B cell (primary cell): ENCODE measurements at regions of chr3 and their contacts with region 1.

Region 1: DNA sequence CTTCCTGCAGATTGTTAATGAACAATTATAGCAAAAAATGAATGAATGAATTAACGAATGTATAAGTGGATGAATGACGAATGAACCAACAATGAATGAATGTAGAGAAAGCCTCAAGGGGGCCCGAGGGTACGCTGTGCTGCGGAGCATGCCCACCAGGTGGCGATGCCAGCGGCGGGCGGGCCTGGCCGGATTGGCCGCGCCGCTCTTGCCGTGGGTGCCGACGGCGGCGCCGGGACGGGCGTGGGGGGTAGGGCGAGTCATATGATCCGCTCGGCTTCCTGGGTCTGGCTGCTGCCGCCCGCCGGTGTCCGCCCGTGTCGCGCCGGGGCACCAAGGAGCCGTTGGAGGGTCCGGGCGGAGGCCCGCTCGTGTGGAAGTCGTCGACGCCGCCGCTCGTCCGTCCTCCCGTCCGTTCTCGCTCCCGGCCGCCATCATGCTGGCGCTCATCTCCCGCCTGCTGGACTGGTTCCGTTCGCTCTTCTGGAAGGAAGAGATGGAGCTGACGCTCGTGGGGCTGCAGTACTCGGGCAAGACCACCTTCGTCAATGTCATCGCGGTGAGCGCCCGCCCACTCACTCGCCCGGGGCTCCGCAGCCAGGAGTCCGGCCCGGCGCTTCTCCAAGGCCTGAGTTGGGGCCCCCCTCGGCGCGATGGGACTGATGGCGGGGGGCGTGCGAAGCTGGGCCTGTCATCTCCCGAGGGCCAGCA is at the start of gene ARL8B:
- DNase-seq: peak; percentile 93
- ATAC-seq: peak; percentile 97
- H3K4me3 ChIP-seq: peak within 1 kb of the TSS; percentile 83 to 100 (median 97)
- H3K4me3 Mint-ChIP-seq: peak within 1 kb of the TSS; percentile 95
- H3K27ac ChIP-seq: peak within 1 kb of the TSS; percentile 88 to 95
- H3K27ac Mint-ChIP-seq: peak within 1 kb of the TSS; percentile 91
- H3K4me1 ChIP-seq: peaks cover 25 to 29% of the 10 kb centered on the region in 2 donors
- H3K4me1 Mint-ChIP-seq: peaks cover 37% of the 10 kb centered on the region
- H3K27me3 ChIP-seq: no peaks in the 10 kb centered on the region
- H3K27me3 Mint-ChIP-seq: no peaks in the 10 kb centered on the region
- CTCF ChIP-seq: peak; percentile 97
- total RNA-seq, gene ARL8B: 66.4 and 67.3 TPM in 2 replicates

Region 2: DNA sequence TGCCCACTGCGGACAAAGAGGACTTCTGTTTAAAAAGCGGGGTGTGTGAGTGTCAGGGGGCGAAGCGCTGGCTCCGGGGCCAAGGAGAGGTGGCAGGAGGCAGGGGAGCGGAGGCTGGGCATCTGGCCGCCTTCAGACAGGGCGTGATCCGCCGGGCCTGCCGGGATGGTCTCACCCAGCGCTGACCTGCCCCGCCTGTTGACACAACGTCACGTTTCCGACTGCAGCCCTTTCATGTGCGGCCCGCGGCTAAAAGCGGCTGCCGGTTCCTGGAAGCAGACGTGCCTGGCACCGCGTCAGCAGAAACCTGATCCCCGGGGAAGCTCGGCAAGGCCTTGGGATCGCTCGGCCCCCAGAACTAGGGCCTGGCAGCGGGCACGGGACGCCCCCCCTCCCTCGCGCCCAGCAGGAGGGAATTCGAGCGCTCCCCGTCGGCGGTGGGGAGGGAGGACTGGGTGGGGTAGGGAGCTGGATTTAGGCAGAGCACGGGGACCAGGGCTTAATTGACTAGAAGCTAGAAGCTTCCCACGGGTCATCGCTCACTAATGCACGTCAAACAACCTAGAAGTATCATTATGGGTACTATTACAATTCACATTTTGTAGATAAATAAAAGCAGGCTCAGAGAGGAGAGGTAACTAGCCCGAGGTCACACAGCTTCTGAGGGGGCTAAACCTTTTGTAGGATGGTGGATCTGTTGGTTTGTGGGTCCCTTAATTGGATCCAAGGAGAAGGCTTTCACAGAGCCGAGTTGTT is 135.2 kb before region 1 on chr3:
- CTCF ChIA-PET with region 1: no interaction called
- POLR2A ChIA-PET with region 1: no interaction called
- intact Hi-C with region 1: loop called (anchors 10 kb)
- DNase-seq: peak; percentile 77
- ATAC-seq: peak; percentile 42
- H3K4me3 ChIP-seq: peak overlapping the region; percentile 0 to 71 (median 68)
- H3K4me3 Mint-ChIP-seq: peak overlapping the region; percentile 90
- H3K27ac ChIP-seq: peak overlapping the region; percentile 86 to 92
- H3K27ac Mint-ChIP-seq: peak overlapping the region; percentile 94
- H3K4me1 ChIP-seq: peaks cover 57 to 65% of the 10 kb centered on the region in 2 donors
- H3K4me1 Mint-ChIP-seq: peaks cover 63% of the 10 kb centered on the region
- H3K27me3 ChIP-seq: no peaks in the 10 kb centered on the region
- H3K27me3 Mint-ChIP-seq: no peaks in the 10 kb centered on the region
- CTCF ChIP-seq: no peak

Region 3: DNA sequence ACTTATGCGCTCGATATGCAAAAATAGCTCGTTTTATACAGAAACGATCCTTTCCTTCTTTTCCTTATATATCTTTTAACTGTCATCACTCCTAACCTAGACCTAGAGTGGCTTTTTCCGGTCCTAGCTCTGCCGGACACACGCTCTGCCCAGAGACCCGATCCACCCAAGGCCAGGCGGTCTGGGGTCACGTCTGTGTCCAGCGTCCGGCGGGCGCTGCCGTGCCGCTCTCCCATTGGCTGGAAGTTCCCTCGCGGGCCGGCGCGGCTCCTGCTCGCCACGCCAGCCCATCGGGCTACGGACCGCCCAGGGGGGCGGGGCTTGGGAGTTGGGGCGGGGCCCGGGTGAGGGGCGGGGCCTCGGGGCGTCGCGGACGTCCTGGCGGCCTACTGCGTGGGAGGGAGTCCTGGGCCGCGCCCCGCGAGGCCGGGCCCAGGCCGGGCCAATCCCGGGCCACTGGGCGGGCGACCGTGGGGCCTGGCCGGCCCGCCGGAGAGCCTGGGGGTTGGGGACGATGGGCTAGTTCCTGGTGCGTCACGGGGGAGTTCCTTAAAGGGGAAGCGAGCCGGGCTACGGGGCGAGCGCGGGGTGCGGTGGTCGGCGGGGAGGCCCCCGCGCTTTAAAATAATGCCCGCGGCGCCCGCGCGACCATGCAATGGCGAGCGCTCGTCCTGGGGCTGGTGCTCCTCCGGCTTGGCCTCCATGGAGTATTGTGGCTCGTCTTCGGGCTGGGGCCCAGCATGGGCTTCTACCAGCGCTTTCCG is 65.2 kb after region 1 on chr3 and contains the start of gene EDEM1:
- CTCF ChIA-PET with region 1: interaction called, 9 read pairs
- POLR2A ChIA-PET with region 1: interaction called, 8 read pairs
- intact Hi-C with region 1: loop called (anchors 1 kb)
- DNase-seq: peak; percentile 96
- ATAC-seq: peak; percentile 88
- H3K4me3 ChIP-seq: peak within 1 kb of the TSS; percentile 91 to 99 (median 94)
- H3K4me3 Mint-ChIP-seq: peak within 1 kb of the TSS; percentile 99
- H3K27ac ChIP-seq: peak within 1 kb of the TSS; percentile 94 to 96
- H3K27ac Mint-ChIP-seq: peak within 1 kb of the TSS; percentile 99
- H3K4me1 ChIP-seq: peaks cover 69 to 75% of the 10 kb centered on the region in 2 donors
- H3K4me1 Mint-ChIP-seq: peaks cover 69% of the 10 kb centered on the region
- H3K27me3 ChIP-seq: no peaks in the 10 kb centered on the region
- H3K27me3 Mint-ChIP-seq: no peaks in the 10 kb centered on the region
- CTCF ChIP-seq: no peak
- total RNA-seq, gene EDEM1: 167 and 177 TPM in 2 replicates

Region 4: DNA sequence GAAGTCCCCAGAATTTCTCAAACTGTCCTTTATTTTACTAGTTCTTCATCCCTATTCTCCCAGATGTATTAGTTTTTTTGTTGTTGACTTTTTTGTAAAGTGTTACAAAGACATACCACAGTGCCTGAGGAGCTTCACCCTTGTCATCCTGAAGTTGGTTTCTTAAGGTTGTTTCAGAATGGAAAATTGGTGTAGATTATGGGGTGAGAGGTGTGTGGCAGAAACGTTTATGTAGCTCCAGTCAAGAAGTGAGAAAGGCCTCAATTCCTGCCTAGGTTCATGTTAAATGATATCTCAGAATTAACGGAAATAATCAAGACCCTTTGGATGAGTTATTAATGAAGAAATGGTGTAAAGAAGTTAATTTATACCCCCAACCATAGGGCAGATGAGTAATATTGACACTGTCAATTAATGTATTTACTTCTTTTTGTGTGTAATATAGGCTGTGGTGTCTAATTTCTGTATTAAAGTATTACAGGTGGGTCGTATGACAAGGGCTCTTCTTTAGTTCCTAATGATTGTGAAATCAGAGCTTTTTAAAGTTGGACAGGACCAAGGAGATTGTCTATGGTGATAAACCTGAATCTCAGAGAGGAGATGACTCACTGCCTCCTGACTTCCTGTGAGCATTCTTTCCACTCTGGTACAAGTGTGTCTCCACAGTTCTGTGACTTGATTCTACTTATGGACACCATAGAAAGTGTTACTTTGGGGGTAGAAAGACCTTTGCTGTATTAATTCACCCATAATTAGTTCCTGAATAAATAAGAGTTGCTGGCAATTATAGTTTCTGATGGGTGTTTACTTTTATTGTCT is 72.4 kb after region 1 on chr3:
- CTCF ChIA-PET with region 1: interaction called, 13 read pairs
- POLR2A ChIA-PET with region 1: no interaction called
- intact Hi-C with region 1: loop called (anchors 2 kb)
- DNase-seq: peak; percentile 48
- ATAC-seq: peak; percentile 56
- H3K4me3 ChIP-seq: no peak overlapping the region
- H3K4me3 Mint-ChIP-seq: peak overlapping the region; percentile 66
- H3K27ac ChIP-seq: peak overlapping the region; percentile 81 to 97
- H3K27ac Mint-ChIP-seq: peak overlapping the region; percentile 82
- H3K4me1 ChIP-seq: peaks cover 86 to 91% of the 10 kb centered on the region in 2 donors
- H3K4me1 Mint-ChIP-seq: peaks cover 87% of the 10 kb centered on the region
- H3K27me3 ChIP-seq: no peaks in the 10 kb centered on the region
- H3K27me3 Mint-ChIP-seq: no peaks in the 10 kb centered on the region
- CTCF ChIP-seq: no peak

Region 5: DNA sequence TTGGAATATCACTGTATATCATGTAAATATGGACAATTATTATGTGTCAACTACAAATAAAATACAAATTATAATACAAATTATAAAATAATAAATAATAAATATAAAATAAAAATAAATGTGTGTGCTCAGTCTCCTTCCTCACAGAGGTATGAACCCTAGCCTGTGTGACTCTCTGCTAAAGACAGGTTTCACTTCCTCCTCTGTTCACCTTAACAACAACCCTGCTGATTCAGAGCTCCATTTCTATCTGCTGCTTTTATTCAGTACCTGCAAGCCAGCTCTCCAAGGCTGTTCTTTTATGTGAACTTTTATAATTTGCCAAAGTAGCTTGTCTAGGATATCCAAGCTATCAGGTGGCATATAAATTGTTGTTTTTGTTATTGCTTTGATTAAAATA is 1128.0 kb after region 1 on chr3:
- CTCF ChIA-PET with region 1: no interaction called
- POLR2A ChIA-PET with region 1: no interaction called
- intact Hi-C with region 1: loop called (anchors 10 kb)
- DNase-seq: peak; percentile 56
- ATAC-seq: peak; percentile 92
- H3K4me3 ChIP-seq: peak overlapping the region in 3 of 5 experiments; percentile 15 to 19 (median 15)
- H3K4me3 Mint-ChIP-seq: peak overlapping the region; percentile 66
- H3K27ac ChIP-seq: peak overlapping the region; percentile 45
- H3K27ac Mint-ChIP-seq: peak overlapping the region; percentile 75
- H3K4me1 ChIP-seq: peaks cover 23 to 38% of the 10 kb centered on the region in 2 donors
- H3K4me1 Mint-ChIP-seq: peaks cover 49% of the 10 kb centered on the region
- H3K27me3 ChIP-seq: no peaks in the 10 kb centered on the region
- H3K27me3 Mint-ChIP-seq: no peaks in the 10 kb centered on the region
- CTCF ChIP-seq: no peak